GM12878 (cell line): ENCODE measurements at regions of chr15 and their contacts with region 1.

Region 1: DNA sequence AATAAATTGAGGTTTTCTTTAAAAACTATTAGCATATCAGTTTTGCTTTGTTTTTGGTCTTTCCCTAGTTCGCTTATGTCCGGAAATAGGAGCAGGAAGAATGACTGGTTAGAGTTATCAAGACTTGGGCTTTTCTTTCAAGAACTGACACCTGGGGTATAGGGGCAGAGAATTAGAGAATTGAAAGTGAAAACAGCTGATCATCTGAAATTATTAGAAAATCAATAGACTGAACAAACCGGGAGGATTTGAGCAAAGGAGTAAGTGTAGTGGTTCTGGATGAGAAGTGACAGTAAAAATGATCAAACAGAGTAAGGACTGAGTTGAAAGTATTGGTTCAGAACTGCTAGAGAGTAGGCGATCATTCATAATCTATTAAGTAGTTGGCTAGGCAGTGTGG is 6.0 kb downstream of the MINDY2 start:
- DNase-seq: peak; percentile 21
- ATAC-seq: peak; percentile 81
- H3K4me3 ChIP-seq: peak overlapping the region; percentile 24; the same call in 1 of the 2 replicates
- H3K27ac ChIP-seq: peak overlapping the region; percentile 43; the same call in 1 of the 2 replicates
- H3K4me1 ChIP-seq: peaks cover 8% of the 10 kb centered on the region; the same call in 1 of the 2 replicates
- H3K27me3 ChIP-seq: no peaks in the 10 kb centered on the region
- CTCF ChIP-seq: no peak
- EP300 ChIP-seq: no peak
- POLR2A ChIP-seq: no peak
- RAD21 ChIP-seq: no peak

Region 2: GRCh38 chr15:58788056-58788710 is 11.1 kb after region 1 on chr15:
- CTCF ChIA-PET with region 1: interaction called, 3 read pairs
- POLR2A ChIA-PET with region 1: interaction called, 13 read pairs
- RAD21 ChIA-PET with region 1: interaction called, 3 read pairs
- SMC1A ChIA-PET with region 1: interaction called, 5 read pairs
- in situ Hi-C with region 1: no loop called
- intact Hi-C with region 1: no loop called
- DNase-seq: no peak
- ATAC-seq: no peak
- H3K4me3 ChIP-seq: no peak overlapping the region
- H3K27ac ChIP-seq: no peak overlapping the region
- H3K4me1 ChIP-seq: no peaks in the 10 kb centered on the region
- H3K27me3 ChIP-seq: no peaks in the 10 kb centered on the region
- CTCF ChIP-seq: no peak
- EP300 ChIP-seq: no peak
- POLR2A ChIP-seq: no peak
- RAD21 ChIP-seq: no peak